Activated T-helper 2 cell treated with anti-CD3 and anti-CD28 coated beads, Interferon-gamma antibody, Interleukin-2, Interleukin-4, amounts not matched to agents 10 μg/mL and 5 μg/mL and 100 μg/mL, durations not matched to agents 14 hours and 24 hours and 36 hours (primary cell): ENCODE measurements at regions of chr4 and their contacts with region 1.

Region 1: GRCh38 chr4:1167247-1167949 is 5.0 kb downstream of the SPON2 start:
- DNase-seq: peak; percentile 86
- H3K4me3 Mint-ChIP-seq: peak overlapping the region; percentile 74
- H3K27ac Mint-ChIP-seq: peak overlapping the region; percentile 60
- H3K4me1 Mint-ChIP-seq: peaks cover 19% of the 10 kb centered on the region
- H3K27me3 Mint-ChIP-seq: peaks cover 17% of the 10 kb centered on the region

Region 2: DNA sequence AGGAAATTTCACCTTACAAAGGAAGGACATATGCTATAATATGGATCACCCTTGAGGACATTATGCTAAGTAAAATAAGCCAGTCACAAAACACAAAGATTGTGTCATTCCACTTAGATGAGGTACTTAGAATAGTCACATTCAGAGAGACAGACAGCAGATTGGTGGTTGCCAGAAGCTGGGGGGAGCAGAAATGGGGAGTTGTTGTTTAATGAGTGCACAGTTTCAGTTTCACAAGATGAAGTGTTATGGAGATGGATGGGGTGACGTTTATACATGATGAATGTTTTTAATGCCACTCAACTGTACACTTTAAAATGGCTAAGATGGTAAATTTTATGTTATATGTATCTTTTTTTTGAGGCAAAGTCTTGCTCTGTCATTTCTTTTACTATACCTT is 19.8 kb after region 1 on chr4:
- intact Hi-C with region 1: loop called (anchors 2 kb)
- DNase-seq: peak; percentile 58
- H3K4me3 Mint-ChIP-seq: no peak overlapping the region
- H3K27ac Mint-ChIP-seq: peak overlapping the region; percentile 21
- H3K4me1 Mint-ChIP-seq: peaks cover 45% of the 10 kb centered on the region
- H3K27me3 Mint-ChIP-seq: no peaks in the 10 kb centered on the region

Region 3: GRCh38 chr4:1200425-1201035 is 33.1 kb after region 1 on chr4:
- intact Hi-C with region 1: loop called (anchors 1 kb)
- DNase-seq: no peak
- H3K4me3 Mint-ChIP-seq: peak overlapping the region; percentile 65
- H3K27ac Mint-ChIP-seq: peak overlapping the region; percentile 98
- H3K4me1 Mint-ChIP-seq: peaks cover 45% of the 10 kb centered on the region
- H3K27me3 Mint-ChIP-seq: no peaks in the 10 kb centered on the region

Region 4: DNA sequence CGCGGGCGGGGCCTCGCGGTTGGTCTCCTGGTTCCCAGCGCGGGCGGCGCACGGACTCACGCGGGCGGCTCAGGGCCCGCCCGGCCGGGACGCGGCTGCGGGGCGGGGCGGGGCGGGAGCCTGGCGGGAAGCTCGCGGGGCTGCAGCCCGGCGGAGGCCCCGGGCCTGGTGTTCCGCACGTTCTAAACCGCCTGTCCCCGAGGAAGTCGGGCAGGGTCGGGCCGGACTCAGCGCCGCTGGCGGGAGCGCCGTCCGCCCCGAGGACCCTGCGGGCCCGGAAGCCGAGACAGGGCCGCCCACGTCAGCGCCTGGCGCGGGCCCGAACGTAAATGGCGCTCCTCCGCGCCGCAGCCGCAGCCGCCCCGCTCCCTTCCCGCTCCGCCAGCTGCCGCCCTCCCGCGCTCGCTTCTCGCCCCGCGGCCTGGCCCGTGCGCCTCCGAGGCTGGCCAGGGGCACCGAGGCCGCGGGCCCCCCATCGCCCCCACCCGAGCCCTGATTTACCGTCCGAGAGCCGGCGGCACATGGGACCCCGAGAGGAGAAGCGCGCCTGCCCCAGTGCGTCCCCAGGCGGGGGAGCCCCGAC is 81.8 kb after region 1 on chr4:
- intact Hi-C with region 1: loop called (anchors 1 kb)
- DNase-seq: peak; percentile 83
- H3K4me3 Mint-ChIP-seq: peak overlapping the region; percentile 87
- H3K27ac Mint-ChIP-seq: peak overlapping the region; percentile 96
- H3K4me1 Mint-ChIP-seq: peaks cover 29% of the 10 kb centered on the region
- H3K27me3 Mint-ChIP-seq: no peaks in the 10 kb centered on the region

Region 5: DNA sequence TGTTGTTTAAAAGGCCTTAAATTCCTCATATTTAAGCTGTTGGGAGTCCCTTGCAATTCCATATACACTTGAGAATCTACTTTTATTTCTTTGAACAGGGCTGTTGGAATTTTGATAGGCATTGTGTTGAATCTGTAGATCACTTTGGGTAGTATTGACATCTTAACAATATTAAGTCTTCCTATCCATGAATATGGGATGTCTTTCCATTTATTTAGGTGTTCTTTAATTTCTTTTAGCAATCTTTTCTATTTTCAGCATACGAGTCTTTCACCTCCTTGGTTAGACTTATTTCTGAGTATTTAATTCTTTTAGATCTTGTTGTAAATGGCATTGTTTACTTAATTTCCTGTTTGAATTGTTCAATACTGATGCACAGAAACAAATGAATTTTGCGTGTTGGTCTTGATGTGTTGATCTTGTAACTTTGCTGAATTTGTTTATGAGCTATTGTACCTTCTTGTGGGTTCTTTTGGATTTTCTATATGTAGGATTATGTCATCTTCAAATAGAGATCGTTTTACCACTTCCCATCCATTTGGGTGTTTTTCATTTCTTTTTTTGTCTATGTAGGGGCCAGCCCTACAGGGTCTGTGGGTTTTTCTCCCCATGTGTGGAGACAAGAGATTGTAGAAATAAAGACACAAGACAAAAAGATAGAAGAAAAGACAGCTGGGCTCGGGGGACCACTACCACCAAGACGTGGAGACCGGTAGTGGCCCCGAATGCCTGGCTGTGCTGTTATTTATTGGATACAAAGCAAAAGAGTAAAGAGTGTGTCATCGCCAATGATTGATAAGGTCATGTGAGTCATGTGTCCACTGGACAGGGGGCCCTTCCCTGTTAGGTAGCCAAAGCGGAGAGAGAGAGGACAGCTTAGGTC is 99.7 kb after region 1 on chr4:
- intact Hi-C with region 1: loop called (anchors 1 kb)
- DNase-seq: no peak
- H3K4me3 Mint-ChIP-seq: peak overlapping the region; percentile 66
- H3K27ac Mint-ChIP-seq: peak overlapping the region; percentile 91
- H3K4me1 Mint-ChIP-seq: peaks cover 25% of the 10 kb centered on the region
- H3K27me3 Mint-ChIP-seq: no peaks in the 10 kb centered on the region

Region 6: DNA sequence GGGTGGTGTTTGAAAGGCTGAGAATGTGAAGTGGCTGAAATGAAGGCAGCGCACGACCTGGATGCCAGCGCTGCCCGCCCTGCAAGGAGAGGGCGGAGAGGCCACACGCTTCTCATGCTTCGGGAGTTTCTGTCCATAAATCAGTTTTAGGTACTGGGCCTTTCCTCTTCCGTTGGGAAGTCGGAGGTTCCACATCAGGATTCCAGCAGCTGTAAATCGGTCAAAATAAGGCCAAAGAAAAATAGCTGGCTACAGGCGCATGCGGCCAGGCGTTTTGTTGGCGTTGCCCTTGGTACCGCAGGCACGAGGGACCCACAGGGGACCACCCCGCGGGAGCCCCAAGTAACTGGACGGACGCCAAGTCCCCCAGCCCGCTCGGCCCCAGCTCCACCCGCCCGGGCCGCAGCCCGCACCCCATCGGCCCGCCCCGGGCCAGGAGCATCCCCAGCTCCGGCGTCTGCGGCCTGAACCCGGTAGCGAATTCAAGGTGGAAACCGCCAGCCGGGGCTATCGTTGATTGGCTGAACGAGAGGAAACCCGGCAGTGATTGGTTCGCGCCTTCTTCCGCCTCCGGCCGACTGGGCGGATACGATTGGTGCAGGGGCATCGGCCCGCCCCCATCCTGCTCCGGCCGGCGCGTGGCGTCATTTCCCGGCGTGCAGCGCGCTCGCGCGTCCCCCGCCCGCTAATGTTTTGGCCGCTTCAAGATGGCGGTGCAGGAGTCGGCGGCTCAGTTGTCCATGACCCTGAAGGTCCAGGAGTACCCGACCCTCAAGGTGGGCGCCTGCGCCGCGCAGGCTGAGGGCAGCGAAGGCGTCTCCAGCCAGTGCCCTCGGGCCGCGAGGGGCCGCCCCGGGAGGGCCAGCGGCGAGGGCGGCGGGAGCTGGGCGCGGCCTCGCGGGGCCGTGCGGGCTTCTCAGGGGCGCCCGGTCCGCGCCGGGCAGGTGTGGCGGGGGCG is 122.1 kb after region 1 on chr4 and contains the start of gene MAEA:
- intact Hi-C with region 1: loop called (anchors 5 kb)
- DNase-seq: peak; percentile 98
- H3K4me3 Mint-ChIP-seq: peak within 1 kb of the TSS; percentile 97
- H3K27ac Mint-ChIP-seq: peak within 1 kb of the TSS; percentile 90
- H3K4me1 Mint-ChIP-seq: peaks cover 23% of the 10 kb centered on the region
- H3K27me3 Mint-ChIP-seq: no peaks in the 10 kb centered on the region
- total RNA-seq, gene MAEA: 59.2 and 62.8 TPM in 2 replicates

Region 7: DNA sequence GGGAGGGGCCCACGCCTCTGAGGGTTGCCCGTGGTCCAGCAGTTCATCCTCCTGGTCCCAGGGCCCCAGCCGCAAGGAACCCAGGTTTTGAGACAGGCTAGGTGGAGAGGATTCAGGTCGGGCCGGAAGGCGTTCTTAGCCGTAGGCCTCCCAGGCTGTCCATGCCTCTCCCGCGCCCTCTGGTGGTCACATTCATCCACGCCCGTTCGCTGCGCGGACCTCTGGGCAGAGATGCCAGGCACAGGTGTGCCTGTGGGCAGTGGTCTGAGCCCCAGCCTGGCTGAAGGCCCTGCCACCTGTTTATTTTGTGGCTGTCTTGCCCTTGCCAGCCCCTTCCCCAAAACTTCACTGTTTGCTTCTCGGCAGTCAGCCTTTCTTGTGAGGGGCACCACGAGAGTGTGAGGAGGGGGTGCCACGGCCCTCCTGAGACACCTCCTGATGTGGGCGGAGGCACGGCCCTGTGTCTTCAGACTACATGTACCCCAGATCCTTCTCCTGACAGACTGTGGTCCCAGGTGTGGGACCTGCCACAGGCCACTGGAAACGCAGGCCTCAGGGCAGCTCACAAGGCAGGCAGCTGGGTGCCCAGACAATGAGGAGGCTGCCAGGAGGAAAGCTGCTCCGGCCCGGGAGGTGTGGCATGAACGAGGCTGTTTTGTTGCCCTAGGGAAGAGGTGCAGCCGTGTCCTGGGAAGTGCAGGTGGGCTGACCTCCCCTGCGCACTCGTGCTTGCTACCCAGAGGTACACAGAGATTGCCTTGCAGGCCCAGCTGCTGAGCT is 184.6 kb after region 1 on chr4:
- intact Hi-C with region 1: loop called (anchors 1 kb)
- DNase-seq: peak; percentile 83
- H3K4me3 Mint-ChIP-seq: no peak overlapping the region
- H3K27ac Mint-ChIP-seq: peak overlapping the region; percentile 60
- H3K4me1 Mint-ChIP-seq: peaks cover 19% of the 10 kb centered on the region
- H3K27me3 Mint-ChIP-seq: no peaks in the 10 kb centered on the region